ENCODE measurements at regions of chr9 and their contacts with region 1.

Region 1: DNA sequence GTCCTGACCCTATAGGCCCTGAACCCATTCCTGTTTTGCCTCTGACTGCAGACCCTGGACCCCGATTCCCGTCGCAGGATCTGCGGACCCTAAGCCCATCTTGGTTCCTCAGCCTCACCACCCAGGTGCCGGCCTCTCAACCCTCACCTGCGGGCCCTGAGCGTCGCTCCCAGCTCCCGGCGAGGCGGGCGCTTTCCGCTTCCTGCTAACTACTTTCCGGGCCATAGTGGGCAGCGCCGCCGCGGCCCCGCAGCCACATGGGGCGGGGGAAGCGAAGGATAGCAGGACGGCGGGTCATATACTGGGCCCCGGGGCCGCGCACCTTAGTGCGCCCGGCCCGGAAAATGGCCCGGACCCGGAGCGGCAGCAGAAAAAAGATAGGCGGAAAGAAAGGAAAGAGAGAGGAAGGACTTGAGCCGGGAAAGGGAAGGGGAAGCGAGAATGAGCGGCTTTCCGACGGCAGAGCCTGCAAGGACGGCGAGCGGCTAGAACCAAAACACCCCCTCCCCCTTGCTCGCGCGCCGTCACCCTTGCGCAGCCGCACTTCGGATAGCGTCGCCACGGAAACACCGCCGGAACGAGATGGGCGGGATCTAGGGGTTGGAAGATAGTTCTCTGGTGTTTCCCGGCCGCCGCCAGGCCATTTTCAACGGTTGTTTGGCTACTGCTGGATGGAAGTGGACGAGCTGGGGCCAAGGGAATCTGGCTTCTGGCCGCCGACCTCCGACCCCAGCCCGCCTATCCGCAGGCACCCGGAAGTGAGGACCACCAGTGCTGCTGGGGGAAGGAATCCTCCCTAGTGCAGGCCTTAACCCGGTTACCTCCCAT is at the start of gene DCAF12:
- DNase-seq: peak; percentile 89 to 96
- ATAC-seq: peak; percentile 91 to 95 (median 94)
- H3K4me3 ChIP-seq: peak within 1 kb of the TSS; percentile 67
- H3K4me3 Mint-ChIP-seq: peak within 1 kb of the TSS; percentile 98
- H3K27ac ChIP-seq: peak within 1 kb of the TSS; percentile 91
- H3K27ac Mint-ChIP-seq: peak within 1 kb of the TSS; percentile 97 to 98
- H3K4me1 ChIP-seq: peaks cover 28% of the 10 kb centered on the region
- H3K4me1 Mint-ChIP-seq: peaks cover 54 to 58% of the 10 kb centered on the region in 2 donors
- H3K27me3 ChIP-seq: no peaks in the 10 kb centered on the region
- H3K27me3 Mint-ChIP-seq: no peaks in the 10 kb centered on the region
- CTCF ChIP-seq: no peak
- total RNA-seq, gene DCAF12: 14.9 to 24.3 (median 21.3) TPM

Region 2: GRCh38 chr9:33426843-33427293 is 699.6 kb before region 1 on chr9:
- intact Hi-C with region 1: no loop called
- DNase-seq: peak; percentile 36 to 42
- ATAC-seq: peak; percentile 80 to 89 (median 86)
- H3K4me3 ChIP-seq: no peak overlapping the region
- H3K4me3 Mint-ChIP-seq: no peak overlapping the region
- H3K27ac ChIP-seq: peak overlapping the region; percentile 61
- H3K27ac Mint-ChIP-seq: peak overlapping the region; percentile 21 to 79
- H3K4me1 ChIP-seq: peaks cover 18% of the 10 kb centered on the region
- H3K4me1 Mint-ChIP-seq: peaks cover 0 to 14% of the 10 kb centered on the region in 2 donors
- H3K27me3 ChIP-seq: no peaks in the 10 kb centered on the region
- H3K27me3 Mint-ChIP-seq: no peaks in the 10 kb centered on the region
- CTCF ChIP-seq: no peak

Region 3: GRCh38 chr9:34048923-34049697 is 77.3 kb before region 1 on chr9:
- intact Hi-C with region 1: loop called (anchors 2 kb)
- DNase-seq: peak; percentile 98
- ATAC-seq: peak; percentile 83 to 94 (median 86)
- H3K4me3 ChIP-seq: peak overlapping the region; percentile 88
- H3K4me3 Mint-ChIP-seq: peak overlapping the region; percentile 96
- H3K27ac ChIP-seq: peak overlapping the region; percentile 82
- H3K27ac Mint-ChIP-seq: peak overlapping the region; percentile 99
- H3K4me1 ChIP-seq: peaks cover 16% of the 10 kb centered on the region
- H3K4me1 Mint-ChIP-seq: peaks cover 24 to 30% of the 10 kb centered on the region in 2 donors
- H3K27me3 ChIP-seq: no peaks in the 10 kb centered on the region
- H3K27me3 Mint-ChIP-seq: no peaks in the 10 kb centered on the region
- CTCF ChIP-seq: no peak

Region 4: DNA sequence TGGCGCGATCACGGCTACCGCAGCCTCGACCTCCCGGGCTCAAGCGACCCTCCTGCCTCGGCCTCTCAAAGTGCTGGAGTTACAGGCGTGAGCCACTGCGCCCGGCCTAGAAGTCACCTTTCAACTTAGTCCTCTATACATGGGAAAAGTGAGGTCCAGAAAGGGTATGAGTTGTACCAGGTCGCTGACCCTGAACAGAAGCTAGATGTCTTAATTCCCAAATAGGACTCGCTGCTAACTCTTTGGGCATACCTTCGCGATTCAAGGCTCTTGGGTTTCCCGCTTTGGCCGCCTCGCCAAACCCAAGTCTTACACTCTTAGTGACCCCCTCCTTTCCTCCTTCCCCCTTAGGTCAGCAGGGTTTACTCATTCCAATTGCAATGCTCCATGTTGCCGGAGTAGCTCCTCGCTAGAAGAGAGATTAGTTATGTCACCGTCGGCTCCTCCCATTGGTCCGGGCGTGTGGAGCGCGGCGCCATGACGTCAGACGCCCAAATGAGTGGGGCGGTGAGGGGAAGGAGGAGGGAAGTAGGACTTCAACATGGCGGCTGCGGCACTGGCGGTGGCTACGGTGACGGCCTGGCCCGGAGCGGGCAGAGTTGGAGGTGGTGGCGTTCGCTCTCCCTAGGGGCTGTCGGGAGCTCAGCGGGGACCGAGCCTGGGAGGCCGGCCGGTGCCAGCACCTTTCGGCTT is 52.2 kb after region 1 on chr9 and contains the start of gene UBAP1:
- intact Hi-C with region 1: loop called (anchors 1 kb)
- DNase-seq: peak; percentile 93 to 98
- ATAC-seq: peak; percentile 95 to 99 (median 97)
- H3K4me3 ChIP-seq: peak within 1 kb of the TSS; percentile 83
- H3K4me3 Mint-ChIP-seq: peak within 1 kb of the TSS; percentile 98
- H3K27ac ChIP-seq: peak within 1 kb of the TSS; percentile 95
- H3K27ac Mint-ChIP-seq: peak within 1 kb of the TSS; percentile 97 to 98
- H3K4me1 ChIP-seq: peaks cover 27% of the 10 kb centered on the region
- H3K4me1 Mint-ChIP-seq: peaks cover 26 to 28% of the 10 kb centered on the region in 2 donors
- H3K27me3 ChIP-seq: no peaks in the 10 kb centered on the region
- H3K27me3 Mint-ChIP-seq: no peaks in the 10 kb centered on the region
- CTCF ChIP-seq: no peak
- total RNA-seq, gene UBAP1: 43.6 to 59.3 (median 49.7) TPM

Region 5: DNA sequence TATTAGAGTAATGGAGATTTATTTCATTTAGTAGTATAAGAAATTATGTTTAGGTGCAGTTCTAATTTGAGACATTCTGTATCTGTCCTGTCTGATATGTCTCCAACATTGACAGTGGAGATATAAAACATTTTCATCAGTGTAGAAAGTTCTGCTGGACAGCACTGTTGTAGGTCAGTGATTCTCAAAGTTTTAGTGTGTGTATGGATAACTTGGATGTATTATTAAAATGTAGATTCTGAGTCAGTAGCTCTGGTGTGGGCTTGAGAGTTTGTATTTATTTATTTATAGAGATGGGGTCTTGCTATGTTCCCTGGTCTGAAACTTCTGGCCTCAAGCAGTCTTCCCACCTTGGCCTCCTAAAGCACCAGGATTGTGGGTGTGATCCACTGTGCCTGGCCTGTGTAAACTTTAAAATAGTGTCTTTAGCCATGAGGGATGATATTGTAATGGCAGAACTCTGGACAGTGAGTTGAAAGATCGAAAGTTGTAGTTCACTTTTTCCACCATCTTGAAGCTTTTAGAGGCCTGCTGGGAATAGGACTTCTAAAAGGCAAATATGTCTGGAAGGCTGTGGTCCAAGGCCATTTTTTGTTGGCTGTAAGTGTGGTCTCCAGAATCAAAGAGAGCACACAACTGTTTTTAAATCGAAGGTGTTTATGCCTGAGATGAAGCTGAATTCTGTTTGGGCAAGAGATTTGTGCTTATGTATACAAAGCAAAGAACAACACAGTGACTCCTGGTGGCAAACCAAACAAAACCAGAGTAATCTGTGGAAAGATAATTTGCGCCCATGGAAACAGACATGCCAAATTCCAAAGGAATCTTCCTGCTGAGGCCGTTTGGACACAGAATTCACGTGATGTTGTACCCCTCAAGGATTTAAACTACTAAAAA is 64.8 kb after region 1 on chr9:
- intact Hi-C with region 1: loop called (anchors 5 kb)
- DNase-seq: no peak
- ATAC-seq: no peak
- H3K4me3 ChIP-seq: no peak overlapping the region
- H3K4me3 Mint-ChIP-seq: peak overlapping the region; percentile 45
- H3K27ac ChIP-seq: no peak overlapping the region
- H3K27ac Mint-ChIP-seq: peak overlapping the region; percentile 71 to 73
- H3K4me1 ChIP-seq: peaks cover 46% of the 10 kb centered on the region
- H3K4me1 Mint-ChIP-seq: peaks cover 47 to 50% of the 10 kb centered on the region in 2 donors
- H3K27me3 ChIP-seq: no peaks in the 10 kb centered on the region
- H3K27me3 Mint-ChIP-seq: no peaks in the 10 kb centered on the region
- CTCF ChIP-seq: no peak

Region 6: DNA sequence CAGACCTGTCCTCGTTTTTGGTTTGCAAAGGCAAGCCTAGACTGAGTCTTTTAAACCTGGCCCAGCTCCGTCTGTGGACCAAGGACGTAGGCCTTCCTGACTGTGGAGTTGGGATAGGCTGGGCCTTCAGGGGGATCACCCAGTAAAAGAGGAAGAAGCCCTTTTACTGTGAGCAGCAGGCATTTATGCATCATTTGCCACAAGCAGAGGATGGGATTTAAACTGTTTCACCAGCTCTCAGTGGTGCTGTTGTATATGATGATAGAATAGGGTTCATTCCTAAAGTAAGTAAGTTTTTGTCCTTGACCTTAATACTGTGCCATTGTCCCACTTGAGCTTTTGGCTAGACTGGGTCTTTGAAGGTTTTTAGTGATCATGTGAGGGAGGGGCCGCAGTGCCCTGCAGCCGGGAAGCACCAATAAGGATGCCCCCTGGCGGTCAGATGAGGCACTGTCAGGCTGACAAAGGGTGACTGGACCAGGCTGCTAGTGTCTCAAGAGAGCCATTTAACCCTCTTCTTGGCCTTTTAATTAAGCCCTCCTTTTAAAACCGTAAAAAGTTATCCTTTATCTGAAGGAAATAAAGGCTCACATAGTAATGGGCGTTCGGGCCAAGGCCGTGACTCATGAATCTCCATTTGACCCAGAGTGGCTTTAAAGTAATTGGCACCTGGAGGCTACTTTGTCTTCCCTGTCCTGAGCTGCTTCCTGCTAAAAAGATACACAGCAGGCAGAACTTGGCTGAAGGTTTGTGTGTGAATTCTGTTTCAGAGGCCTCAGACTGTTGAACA is 126.4 kb after region 1 on chr9:
- intact Hi-C with region 1: loop called (anchors 1 kb)
- DNase-seq: peak; percentile 66 to 82
- ATAC-seq: peak; percentile 75 to 91 (median 77)
- H3K4me3 ChIP-seq: no peak overlapping the region
- H3K4me3 Mint-ChIP-seq: no peak overlapping the region
- H3K27ac ChIP-seq: no peak overlapping the region
- H3K27ac Mint-ChIP-seq: peak overlapping the region; percentile 43 to 62
- H3K4me1 ChIP-seq: peaks cover 6% of the 10 kb centered on the region
- H3K4me1 Mint-ChIP-seq: no peaks in the 10 kb centered on the region
- H3K27me3 ChIP-seq: no peaks in the 10 kb centered on the region
- H3K27me3 Mint-ChIP-seq: no peaks in the 10 kb centered on the region
- CTCF ChIP-seq: peak; percentile 96

Region 7: DNA sequence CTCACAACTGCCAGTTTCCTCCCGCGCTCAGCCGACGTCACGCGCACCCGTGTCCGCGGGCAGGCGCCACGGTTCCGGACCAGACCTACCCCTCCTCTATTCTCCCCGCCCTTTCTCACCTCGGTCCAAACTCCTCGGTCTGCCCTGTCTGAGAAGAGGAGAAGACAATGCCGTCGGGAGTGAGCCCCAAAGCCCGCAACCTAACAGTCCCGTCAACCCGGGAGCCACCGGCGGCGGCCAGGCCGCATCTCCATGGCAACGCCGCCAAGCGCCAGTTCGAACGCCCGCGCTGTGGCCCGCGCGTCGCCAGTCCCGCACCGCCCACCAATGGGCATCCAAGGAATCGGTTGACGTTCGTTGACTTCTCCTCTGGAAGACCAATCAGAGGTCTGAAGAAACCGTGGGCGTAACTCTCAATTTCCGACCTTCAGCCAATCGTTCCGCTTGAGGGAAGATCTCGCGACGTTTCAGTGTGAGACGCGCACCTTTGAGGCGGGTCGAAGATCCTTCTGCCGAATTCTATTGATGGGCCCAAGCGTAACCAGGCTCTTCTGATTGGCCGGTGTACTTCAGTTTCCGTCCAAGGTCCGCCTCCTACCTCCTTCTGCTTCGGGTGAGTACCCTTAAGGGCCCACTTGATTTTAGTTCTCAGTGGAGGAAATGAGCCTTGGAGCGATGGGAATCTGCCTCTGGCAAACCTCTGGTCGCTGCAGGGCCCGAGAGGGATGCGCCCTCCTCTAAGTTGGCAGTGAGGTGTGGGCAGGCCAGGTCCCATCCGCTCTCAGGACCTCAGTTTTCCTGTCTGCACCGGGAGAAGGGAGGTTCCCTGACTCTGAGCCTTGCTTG is 202.8 kb after region 1 on chr9 and contains the starts of genes KIF24 and NUDT2:
- intact Hi-C with region 1: loop called (anchors 5 kb)
- DNase-seq: peak; percentile 92 to 99
- ATAC-seq: peak; percentile 90 to 97 (median 91)
- H3K4me3 ChIP-seq: peak within 1 kb of the TSS; percentile 96
- H3K4me3 Mint-ChIP-seq: peak within 1 kb of the TSS; percentile 94
- H3K27ac ChIP-seq: peak within 1 kb of the TSS; percentile 95
- H3K27ac Mint-ChIP-seq: peak within 1 kb of the TSS; percentile 95
- H3K4me1 ChIP-seq: peaks cover 17% of the 10 kb centered on the region
- H3K4me1 Mint-ChIP-seq: peaks cover 23 to 26% of the 10 kb centered on the region in 2 donors
- H3K27me3 ChIP-seq: no peaks in the 10 kb centered on the region
- H3K27me3 Mint-ChIP-seq: no peaks in the 10 kb centered on the region
- CTCF ChIP-seq: no peak
- total RNA-seq, gene KIF24: 0.28 to 0.50 (median 0.30) TPM
- total RNA-seq, gene NUDT2: 8.5 to 15.7 (median 9.4) TPM

Region 8: GRCh38 chr9:34376596-34377403 is 250.4 kb after region 1 on chr9 and contains the start of gene MYORG:
- intact Hi-C with region 1: loop called (anchors 5 kb)
- DNase-seq: peak; percentile 80 to 97
- ATAC-seq: peak; percentile 71 to 86 (median 75)
- H3K4me3 ChIP-seq: peak within 1 kb of the TSS; percentile 54
- H3K4me3 Mint-ChIP-seq: peak within 1 kb of the TSS; percentile 90
- H3K27ac ChIP-seq: peak within 1 kb of the TSS; percentile 32
- H3K27ac Mint-ChIP-seq: peak within 1 kb of the TSS; percentile 58 to 82
- H3K4me1 ChIP-seq: peaks cover 44% of the 10 kb centered on the region
- H3K4me1 Mint-ChIP-seq: peaks cover 43 to 49% of the 10 kb centered on the region in 2 donors
- H3K27me3 ChIP-seq: no peaks in the 10 kb centered on the region
- H3K27me3 Mint-ChIP-seq: peaks cover 0 to 6% of the 10 kb centered on the region in 2 donors
- CTCF ChIP-seq: no peak
- total RNA-seq, gene MYORG: 0.58 to 0.93 (median 0.92) TPM

Measured in natural killer cell (primary cell).